ENCODE measurements at regions of chr12 and their contacts with region 1.

Region 1: DNA sequence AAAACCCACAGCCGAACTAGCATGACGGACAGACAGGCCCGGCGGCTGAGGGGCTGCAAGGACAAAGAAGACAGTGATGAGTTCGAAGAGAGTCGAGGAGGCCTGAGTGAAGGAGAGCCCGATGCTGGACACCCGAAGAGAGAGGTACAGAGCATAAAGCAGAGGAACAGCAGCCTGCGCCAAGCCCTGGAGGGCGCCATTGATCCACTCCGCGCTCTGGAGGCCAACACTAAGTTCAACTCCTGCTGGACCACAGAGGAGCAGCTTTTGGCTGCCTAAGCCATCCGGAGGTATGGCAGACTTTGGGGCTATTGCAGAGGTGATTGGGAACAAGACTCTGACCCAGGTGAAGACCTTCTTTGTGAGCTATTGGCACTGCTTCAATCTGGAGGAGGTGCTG is 7.8 kb upstream of the PLXNC1 start:
- DNase-seq: no peak
- ATAC-seq: no peak

Region 2: GRCh38 chr12:93990832-93991803 is 149.4 kb before region 1 on chr12:
- intact Hi-C with region 1: no loop called
- DNase-seq: no peak
- ATAC-seq: peak; percentile 93

Region 3: DNA sequence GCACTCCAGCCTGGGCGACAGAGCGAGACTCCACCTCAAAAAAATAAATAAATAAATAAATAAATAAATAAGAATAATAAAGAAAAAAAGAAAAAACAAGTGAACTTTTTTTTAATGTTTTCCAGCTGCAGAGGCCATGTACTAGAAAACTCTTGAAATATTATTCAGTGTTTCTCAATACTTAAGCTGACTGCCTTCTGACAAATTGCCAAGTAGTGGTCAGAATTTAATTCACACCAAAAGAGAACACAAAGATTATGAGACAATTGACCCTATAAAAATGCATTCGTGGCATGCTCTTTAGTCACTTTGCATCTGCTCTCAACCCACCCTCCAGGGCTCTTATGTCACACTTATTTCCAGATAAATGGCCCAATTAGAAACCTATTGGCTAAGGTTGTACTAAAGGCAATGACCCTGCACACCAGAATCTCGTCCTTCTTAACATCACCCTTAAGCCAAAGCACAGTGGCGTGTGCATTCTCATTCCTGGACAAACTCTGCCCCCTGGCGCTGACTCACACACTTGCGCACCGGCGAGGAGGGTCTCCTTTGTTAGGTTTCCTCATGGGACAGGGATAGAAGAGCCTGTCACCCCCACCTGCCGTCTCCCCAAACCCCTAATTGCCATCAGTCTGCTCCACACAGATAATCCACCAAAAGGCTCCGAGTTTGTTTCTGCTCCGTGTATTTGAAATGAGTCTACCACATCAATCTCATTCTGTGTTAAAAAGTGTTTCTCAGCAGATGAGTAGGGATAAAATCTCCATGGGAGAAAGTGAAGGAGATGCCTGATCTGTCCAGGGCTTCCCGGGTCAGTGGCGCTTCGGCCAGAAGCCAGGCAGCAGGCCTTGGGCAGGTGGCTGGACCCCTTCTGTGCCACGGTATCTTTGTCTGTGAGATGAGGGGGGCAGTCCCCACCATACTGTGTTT is 392.2 kb after region 1 on chr12:
- intact Hi-C with region 1: loop called (anchors 5 kb)
- DNase-seq: peak; percentile 87
- ATAC-seq: peak; percentile 93

Region 4: DNA sequence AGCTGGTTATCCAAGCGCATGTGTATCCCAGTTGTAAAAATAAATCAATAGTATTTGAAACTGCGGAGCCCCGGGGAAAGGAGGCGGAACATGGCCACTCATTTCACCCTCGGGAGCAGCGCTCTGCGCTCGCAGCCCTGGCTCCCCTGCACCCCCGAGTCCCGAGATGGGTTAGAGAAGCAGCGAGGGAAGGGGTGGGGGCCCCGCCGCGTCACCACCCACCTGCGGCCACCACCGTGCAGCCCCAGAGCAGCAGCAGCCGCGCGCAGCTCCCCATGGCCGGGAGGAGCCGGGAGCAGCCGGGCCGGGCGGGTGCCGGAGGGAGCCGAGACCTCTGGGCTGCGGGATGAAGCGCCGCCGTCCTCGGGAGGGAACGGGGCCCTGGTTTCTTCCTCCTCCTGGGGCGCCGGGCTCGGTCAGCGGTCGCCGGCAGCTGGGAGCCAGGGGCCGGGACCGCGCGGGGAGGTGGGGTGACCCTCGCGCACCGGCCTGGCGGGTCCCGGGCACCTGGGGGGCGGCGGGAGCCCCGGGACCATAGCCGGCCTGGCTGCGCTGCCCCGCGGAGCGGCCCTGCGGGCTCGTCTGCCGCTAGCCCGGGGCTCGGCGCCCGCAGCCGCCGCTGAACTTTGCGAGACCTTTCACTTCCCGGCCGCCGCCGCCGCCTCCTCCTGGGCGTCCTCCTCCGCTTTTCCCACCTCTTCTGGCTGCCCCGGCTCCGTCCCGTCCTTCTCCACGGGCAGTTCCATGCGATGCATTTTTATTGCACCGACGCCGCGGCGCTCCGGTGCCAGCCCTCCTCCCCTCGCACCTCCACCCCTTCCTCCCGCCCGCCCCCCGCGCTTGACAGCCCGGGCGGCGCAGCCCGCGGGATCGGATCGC is 1649.7 kb after region 1 on chr12 and contains the start of gene NTN4:
- intact Hi-C with region 1: no loop called
- DNase-seq: peak; percentile 66
- ATAC-seq: peak; percentile 59
- total RNA-seq, gene NTN4: 40.3 TPM

Measured in sciatic nerve (tissue), 2 donors.